ENCODE measurements at regions of chr12 and their contacts with region 1.

Region 1: DNA sequence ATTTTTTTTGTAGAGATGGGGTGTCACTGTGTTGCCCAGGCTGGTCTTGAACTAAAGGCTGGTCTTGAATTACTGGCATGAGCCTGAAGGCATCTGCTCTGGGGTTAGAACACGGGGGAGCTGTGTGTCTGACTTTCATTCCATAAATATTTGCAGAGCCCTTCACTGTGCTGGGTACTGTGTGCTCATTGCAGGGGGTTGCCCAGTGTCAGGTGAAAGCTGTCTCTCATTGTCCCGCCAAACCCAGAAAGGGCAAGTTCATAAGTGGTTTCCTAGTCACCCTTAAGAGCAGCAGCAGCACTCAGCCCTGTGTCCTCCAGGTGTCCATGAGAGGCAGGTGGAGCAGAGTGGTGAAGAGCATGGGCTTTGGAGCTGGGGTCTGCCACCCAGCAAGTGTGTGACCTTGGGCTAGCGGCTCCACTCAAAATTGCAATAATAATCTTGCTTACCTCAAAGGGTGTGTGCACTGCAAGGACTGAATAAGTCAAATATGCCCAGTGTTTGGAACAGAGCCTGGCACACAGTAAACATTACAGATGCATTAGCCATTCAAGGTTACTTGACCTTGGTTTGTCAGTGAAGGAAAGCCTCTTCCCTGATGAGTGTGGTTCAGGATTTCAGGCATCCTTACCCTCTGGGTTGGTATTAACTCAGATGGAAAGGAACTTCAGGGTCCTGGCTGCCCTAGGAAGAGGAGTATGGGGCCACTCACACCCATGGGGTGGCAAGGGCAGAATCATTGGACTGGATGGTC is 4.4 kb upstream of the SMIM41 start:
- DNase-seq: no peak
- H3K4me3 ChIP-seq: no peak overlapping the region
- H3K27ac ChIP-seq: no peak overlapping the region
- H3K4me1 ChIP-seq: peaks cover 0 to 12% of the 10 kb centered on the region in 2 donors
- H3K27me3 ChIP-seq: no peaks in the 10 kb centered on the region
- CTCF ChIP-seq: no peak
- POLR2A ChIP-seq: no peak

Region 2: DNA sequence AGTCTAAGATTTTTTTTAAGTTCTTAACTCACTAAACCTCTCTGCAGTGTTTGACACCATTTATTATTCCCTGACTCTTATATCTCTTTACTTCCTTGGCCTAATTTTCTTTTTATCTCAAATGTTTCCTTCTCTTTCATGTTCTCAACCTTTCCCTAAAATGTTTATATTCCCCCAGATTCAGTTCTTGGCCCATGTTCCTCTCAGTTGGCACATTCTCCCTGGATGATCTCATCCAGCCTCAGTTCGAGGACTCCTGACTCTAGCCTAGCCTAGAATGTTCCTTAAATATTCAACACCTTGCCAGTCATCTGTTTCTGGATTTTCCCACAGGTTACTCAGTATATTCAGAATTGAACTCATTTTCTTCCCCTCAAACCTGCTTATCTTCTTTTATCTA is 402.8 kb before region 1 on chr12:
- intact Hi-C with region 1: loop called (anchors 5 kb)
- DNase-seq: no peak
- H3K4me3 ChIP-seq: no peak overlapping the region
- H3K27ac ChIP-seq: no peak overlapping the region
- H3K4me1 ChIP-seq: no peaks in the 10 kb centered on the region
- H3K27me3 ChIP-seq: no peaks in the 10 kb centered on the region
- CTCF ChIP-seq: no peak
- POLR2A ChIP-seq: no peak

Region 3: GRCh38 chr12:52787324-52788191 is 712.4 kb after region 1 on chr12:
- intact Hi-C with region 1: no loop called
- DNase-seq: no peak
- H3K4me3 ChIP-seq: no peak overlapping the region
- H3K27ac ChIP-seq: no peak overlapping the region
- H3K4me1 ChIP-seq: no peaks in the 10 kb centered on the region
- H3K27me3 ChIP-seq: peaks cover 0 to 8% of the 10 kb centered on the region in 2 donors
- CTCF ChIP-seq: no peak
- POLR2A ChIP-seq: no peak